Naive thymus-derived CD4-positive, alpha-beta T cell (primary cell): ENCODE measurements at regions of chr2 and their contacts with region 1.

Region 1: DNA sequence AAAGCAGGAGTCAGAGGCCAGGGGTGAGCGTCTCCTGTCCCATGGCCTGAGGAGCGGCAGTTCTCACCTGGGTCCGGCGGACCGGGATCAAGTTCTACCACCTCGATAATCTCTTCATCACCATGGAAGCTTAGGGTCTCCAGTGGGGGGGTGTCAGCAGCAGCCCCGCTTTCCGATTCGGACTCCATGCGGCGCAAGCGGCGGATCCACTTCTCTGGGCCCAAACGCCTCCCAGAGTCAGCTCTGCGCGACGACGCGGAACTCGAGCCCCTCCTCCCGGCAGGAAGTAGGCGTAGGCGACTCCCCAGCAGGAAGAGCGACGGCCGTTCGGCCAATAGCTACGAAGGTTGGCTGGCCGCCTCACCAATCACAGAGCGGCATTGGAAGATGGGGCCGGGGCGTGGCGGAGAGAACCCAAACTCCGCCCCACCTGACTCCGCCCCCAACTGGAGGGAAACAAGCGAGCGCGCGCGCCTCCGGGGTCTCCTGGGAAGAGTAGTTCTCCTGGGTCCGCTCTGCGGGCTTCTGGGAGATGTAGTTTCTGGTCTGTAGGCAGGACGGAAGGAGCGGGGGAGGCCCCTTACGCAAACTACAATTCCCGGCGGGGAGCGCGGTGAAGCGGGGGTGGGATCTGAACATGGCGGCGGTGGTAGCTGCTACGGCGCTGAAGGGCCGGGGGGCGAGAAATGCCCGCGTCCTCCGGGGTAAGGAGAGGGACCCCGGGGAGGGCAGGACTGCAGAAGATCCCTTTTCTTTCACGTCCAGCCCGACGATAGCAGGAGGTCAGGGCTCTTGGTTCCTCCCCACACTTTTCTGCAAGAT is at the starts of genes AAMP and PNKD:
- DNase-seq: peak; percentile 99 to 100 (median 100)
- ATAC-seq: peak; percentile 95
- H3K4me3 ChIP-seq: peak within 1 kb of the TSS; percentile 96
- H3K4me3 Mint-ChIP-seq: peak within 1 kb of the TSS; percentile 84 to 99 (median 93)
- H3K27ac ChIP-seq: peak within 1 kb of the TSS; percentile 92
- H3K27ac Mint-ChIP-seq: peak within 1 kb of the TSS; percentile 82 to 95 (median 92)
- H3K4me1 ChIP-seq: peaks cover 27 to 30% of the 10 kb centered on the region in 2 donors
- H3K4me1 Mint-ChIP-seq: peaks cover 30 to 59% (median 51%) of the 10 kb centered on the region in 7 donors
- H3K27me3 ChIP-seq: no peaks in the 10 kb centered on the region
- H3K27me3 Mint-ChIP-seq: no peaks in the 10 kb centered on the region
- total RNA-seq, gene AAMP: 54.1 to 67.0 (median 61.2) TPM
- total RNA-seq, gene PNKD: 18.5 to 38.4 (median 25.2) TPM

Region 2: DNA sequence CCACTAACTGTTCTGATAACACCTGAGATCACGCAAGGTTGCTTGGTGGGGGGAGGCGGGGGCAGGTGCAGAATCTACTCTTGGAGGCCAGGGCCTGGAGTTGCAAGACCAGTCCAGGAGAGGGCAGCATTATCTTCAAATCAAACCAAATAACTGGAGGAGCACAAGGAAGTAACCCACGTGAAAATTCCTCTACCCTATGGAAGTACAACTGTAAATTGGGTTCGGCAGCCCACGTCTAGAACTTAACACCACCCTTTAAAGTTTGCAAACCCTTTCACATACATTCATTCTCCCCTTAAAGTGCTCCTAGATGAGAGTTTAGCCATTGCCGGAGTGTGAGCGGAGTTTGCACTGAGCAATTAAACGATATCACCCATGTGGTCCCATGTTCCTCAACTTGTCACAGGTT is 83.7 kb before region 1 on chr2:
- CTCF ChIA-PET with region 1: interaction called, 5 read pairs
- POLR2A ChIA-PET with region 1: interaction called, 5 read pairs
- intact Hi-C with region 1: loop called (anchors 1 kb)
- DNase-seq: peak; percentile 29 to 79 (median 70)
- ATAC-seq: peak; percentile 97
- H3K4me3 ChIP-seq: no peak overlapping the region
- H3K4me3 Mint-ChIP-seq: no peak overlapping the region
- H3K27ac ChIP-seq: no peak overlapping the region
- H3K27ac Mint-ChIP-seq: peak overlapping the region in 1 of 9 donors; percentile 3
- H3K4me1 ChIP-seq: no peaks in the 10 kb centered on the region
- H3K4me1 Mint-ChIP-seq: peaks cover 0 to 14% (median 8%) of the 10 kb centered on the region in 7 donors
- H3K27me3 ChIP-seq: no peaks in the 10 kb centered on the region
- H3K27me3 Mint-ChIP-seq: peaks cover 0 to 24% (median 0%) of the 10 kb centered on the region in 5 donors

Region 3: DNA sequence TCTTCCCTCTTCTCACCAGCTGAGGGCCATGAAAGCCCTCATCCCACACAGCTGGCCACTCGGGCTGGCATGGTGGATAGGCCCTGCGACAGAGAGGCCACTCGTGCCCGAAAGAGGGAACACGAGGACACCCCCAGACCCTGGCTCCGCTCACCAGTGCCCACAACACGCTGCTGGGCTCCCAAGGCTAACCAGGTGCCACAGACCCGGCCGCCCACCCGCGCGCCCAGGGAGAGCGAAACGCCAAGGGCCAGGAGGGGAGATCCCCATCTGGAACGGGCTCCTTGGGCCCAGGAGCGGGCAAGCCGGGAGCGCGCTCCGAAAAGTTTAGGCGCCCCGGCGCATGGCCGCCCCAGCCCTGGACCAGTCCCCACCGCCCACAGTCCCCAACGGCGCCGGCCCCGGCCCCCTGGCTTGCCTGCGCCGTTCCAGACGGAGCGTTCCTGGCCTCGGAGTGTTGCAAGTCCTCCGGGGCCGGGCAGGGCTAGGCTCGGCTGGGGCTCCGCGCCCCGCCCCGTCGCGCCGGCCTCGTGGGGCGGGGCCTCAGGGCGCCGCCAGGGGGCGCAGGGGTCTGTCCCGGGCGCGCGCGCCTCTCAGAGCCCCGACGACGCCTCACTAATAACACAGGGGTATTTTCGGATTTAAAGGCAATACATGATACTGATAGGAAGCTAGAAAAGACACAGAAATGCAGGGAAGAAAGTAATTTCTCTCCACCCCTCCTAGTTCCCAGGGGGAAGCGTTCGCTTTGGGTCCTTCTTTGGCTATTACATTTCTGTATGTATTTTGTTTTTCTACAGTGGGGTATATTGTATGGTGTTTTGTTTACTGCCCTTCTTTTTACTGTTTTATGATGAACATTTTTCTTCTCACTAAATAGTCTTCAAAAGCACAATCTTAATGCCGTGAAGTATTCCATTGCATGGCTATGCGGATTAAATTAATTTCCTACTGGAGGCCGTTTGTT is 22.2 kb after region 1 on chr2 and contains the start of gene TMBIM1:
- CTCF ChIA-PET with region 1: interaction called, 188 read pairs
- POLR2A ChIA-PET with region 1: interaction called, 125 read pairs
- intact Hi-C with region 1: loop called (anchors 1 kb)
- DNase-seq: peak; percentile 72 to 90 (median 83)
- ATAC-seq: peak; percentile 96
- H3K4me3 ChIP-seq: peak within 1 kb of the TSS; percentile 53
- H3K4me3 Mint-ChIP-seq: peak within 1 kb of the TSS; percentile 82 to 96 (median 92)
- H3K27ac ChIP-seq: peak within 1 kb of the TSS; percentile 93
- H3K27ac Mint-ChIP-seq: peak within 1 kb of the TSS; percentile 88 to 99 (median 98)
- H3K4me1 ChIP-seq: peaks cover 42 to 47% of the 10 kb centered on the region in 2 donors
- H3K4me1 Mint-ChIP-seq: peaks cover 32 to 61% (median 53%) of the 10 kb centered on the region in 7 donors
- H3K27me3 ChIP-seq: no peaks in the 10 kb centered on the region
- H3K27me3 Mint-ChIP-seq: peaks cover 0 to 2% (median 0%) of the 10 kb centered on the region in 5 donors
- total RNA-seq, gene TMBIM1: 51.7 to 112 (median 83.8) TPM

Region 4: GRCh38 chr2:218367415-218368153 is 97.5 kb after region 1 on chr2:
- CTCF ChIA-PET with region 1: interaction called, 4 read pairs
- POLR2A ChIA-PET with region 1: interaction called, 4 read pairs
- intact Hi-C with region 1: loop called in 1 of 2 experiments (anchors 1 kb)
- DNase-seq: peak; percentile 55 to 79 (median 62)
- ATAC-seq: peak; percentile 89
- H3K4me3 ChIP-seq: peak overlapping the region; percentile 74
- H3K4me3 Mint-ChIP-seq: peak overlapping the region; percentile 75 to 87 (median 82)
- H3K27ac ChIP-seq: peak overlapping the region; percentile 72
- H3K27ac Mint-ChIP-seq: peak overlapping the region; percentile 14 to 94 (median 89)
- H3K4me1 ChIP-seq: peaks cover 0 to 17% of the 10 kb centered on the region in 2 donors
- H3K4me1 Mint-ChIP-seq: peaks cover 11 to 51% (median 31%) of the 10 kb centered on the region in 7 donors
- H3K27me3 ChIP-seq: no peaks in the 10 kb centered on the region
- H3K27me3 Mint-ChIP-seq: peaks cover 0 to 33% (median 0%) of the 10 kb centered on the region in 5 donors

Region 5: DNA sequence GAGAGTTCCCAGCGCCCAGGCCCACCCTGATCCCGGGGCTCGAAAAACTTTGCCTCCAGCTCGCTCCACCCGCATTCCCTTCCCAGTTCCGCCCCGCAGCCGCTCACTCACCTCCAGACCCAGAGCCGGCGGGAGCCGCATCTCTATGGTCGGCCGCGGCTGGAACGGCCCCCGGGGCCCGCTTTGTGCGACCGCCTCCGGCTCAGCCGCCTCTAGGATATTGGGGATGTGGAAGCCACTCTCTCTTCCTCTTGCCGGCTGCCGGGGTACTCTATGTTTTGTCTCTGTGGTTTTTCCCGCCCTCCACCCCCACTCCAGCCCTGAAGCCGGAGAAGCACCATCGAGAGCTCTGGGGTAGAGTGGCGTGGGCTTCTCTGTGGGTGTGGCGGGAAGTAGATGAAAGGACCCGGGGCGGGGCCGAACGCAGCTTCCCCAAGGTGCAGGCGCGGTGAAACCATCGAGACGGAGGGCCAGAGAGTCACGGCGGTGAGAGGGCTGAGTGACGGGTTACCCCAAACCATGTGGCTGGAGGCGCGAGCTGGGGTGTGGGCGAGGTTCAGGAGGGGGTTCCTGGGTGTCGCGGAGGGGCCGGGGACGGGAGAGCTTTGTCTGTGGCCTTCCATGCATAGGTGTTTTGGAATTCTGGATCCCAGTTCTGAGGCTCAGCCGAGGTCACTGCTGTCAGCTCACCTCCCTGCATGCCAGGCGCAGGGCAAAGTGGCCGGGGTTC is 389.3 kb after region 1 on chr2 and contains the starts of genes BCS1L and ZNF142:
- CTCF ChIA-PET with region 1: interaction called, 3 read pairs
- POLR2A ChIA-PET with region 1: no interaction called
- intact Hi-C with region 1: loop called (anchors 1 kb)
- DNase-seq: peak; percentile 75 to 95 (median 90)
- ATAC-seq: peak; percentile 99
- H3K4me3 ChIP-seq: peak within 1 kb of the TSS; percentile 83
- H3K4me3 Mint-ChIP-seq: peak within 1 kb of the TSS; percentile 90 to 99 (median 98)
- H3K27ac ChIP-seq: peak within 1 kb of the TSS; percentile 80
- H3K27ac Mint-ChIP-seq: peak within 1 kb of the TSS; percentile 74 to 96 (median 93)
- H3K4me1 ChIP-seq: peaks cover 7 to 15% of the 10 kb centered on the region in 2 donors
- H3K4me1 Mint-ChIP-seq: peaks cover 25 to 45% (median 38%) of the 10 kb centered on the region in 7 donors
- H3K27me3 ChIP-seq: no peaks in the 10 kb centered on the region
- H3K27me3 Mint-ChIP-seq: no peaks in the 10 kb centered on the region
- total RNA-seq, gene BCS1L: 21.4 to 62.0 (median 49.0) TPM
- total RNA-seq, gene ZNF142: 38.7 to 49.8 (median 40.8) TPM

Region 6: GRCh38 chr2:219087361-219087760 is 817.3 kb after region 1 on chr2:
- CTCF ChIA-PET with region 1: no interaction called
- POLR2A ChIA-PET with region 1: no interaction called
- intact Hi-C with region 1: no loop called
- DNase-seq: no peak
- ATAC-seq: no peak
- H3K4me3 ChIP-seq: no peak overlapping the region
- H3K4me3 Mint-ChIP-seq: no peak overlapping the region
- H3K27ac ChIP-seq: no peak overlapping the region
- H3K27ac Mint-ChIP-seq: no peak overlapping the region
- H3K4me1 ChIP-seq: no peaks in the 10 kb centered on the region
- H3K4me1 Mint-ChIP-seq: peaks cover 9 to 18% (median 11%) of the 10 kb centered on the region in 7 donors
- H3K27me3 ChIP-seq: no peaks in the 10 kb centered on the region
- H3K27me3 Mint-ChIP-seq: no peaks in the 10 kb centered on the region

Region 7: GRCh38 chr2:219177552-219178376 is 907.7 kb after region 1 on chr2 and contains the start of gene RETREG2:
- CTCF ChIA-PET with region 1: no interaction called
- POLR2A ChIA-PET with region 1: no interaction called
- intact Hi-C with region 1: loop called in 1 of 2 experiments (anchors 5 kb)
- DNase-seq: peak; percentile 79 to 86 (median 83)
- ATAC-seq: peak; percentile 73
- H3K4me3 ChIP-seq: peak within 1 kb of the TSS; percentile 97
- H3K4me3 Mint-ChIP-seq: peak within 1 kb of the TSS; percentile 90 to 99 (median 96)
- H3K27ac ChIP-seq: peak within 1 kb of the TSS; percentile 96
- H3K27ac Mint-ChIP-seq: peak within 1 kb of the TSS; percentile 97 to 100 (median 99)
- H3K4me1 ChIP-seq: peaks cover 44 to 47% of the 10 kb centered on the region in 2 donors
- H3K4me1 Mint-ChIP-seq: peaks cover 48 to 80% (median 69%) of the 10 kb centered on the region in 7 donors
- H3K27me3 ChIP-seq: no peaks in the 10 kb centered on the region
- H3K27me3 Mint-ChIP-seq: no peaks in the 10 kb centered on the region
- total RNA-seq, gene RETREG2: 70.2 to 124 (median 90.9) TPM